Pancreas (tissue), 10 donors: ENCODE measurements at regions of chr3 and their contacts with region 1.

Region 1: DNA sequence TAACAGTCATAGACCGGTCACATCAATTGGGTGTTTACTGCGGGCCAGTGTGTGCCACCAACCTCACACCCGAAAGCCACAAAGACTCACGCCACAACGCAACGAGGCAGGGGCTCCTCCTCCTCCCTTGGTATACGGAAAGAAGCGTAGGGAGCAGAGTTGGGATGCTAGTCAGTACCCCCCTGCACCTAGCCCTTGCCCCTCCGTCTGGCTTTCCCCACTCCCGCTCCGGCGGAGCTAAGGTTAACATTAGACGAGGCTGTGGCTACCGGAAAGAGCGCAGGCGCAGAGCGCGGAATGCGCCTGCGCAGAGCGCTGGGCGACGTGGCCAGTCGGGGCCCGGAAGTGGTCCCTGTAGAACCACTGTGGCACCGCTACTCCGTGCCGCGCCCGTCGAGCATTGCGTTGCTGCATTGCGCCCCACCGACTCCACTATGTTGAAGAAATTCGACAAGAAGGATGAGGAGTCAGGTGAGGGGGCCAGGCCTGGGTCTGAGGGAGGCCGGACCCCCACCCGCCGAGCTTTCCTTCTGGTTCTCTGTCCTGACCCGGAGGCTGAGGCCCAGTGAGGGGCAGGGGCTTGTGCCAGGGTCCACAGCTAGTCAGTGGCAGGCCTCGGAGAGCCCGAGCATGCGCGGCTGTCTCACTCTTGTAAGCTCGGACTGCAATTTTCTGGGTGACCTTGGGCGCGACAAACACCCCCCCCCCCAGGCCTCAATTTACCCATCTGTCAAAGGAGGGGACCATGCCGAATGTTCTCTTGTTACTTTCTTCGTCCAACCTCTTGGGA is at the start of gene COPG1:
- DNase-seq: peak; percentile 75 to 96 (median 90)
- ATAC-seq: peak; percentile 88 to 95 (median 94)
- H3K4me3 ChIP-seq: peak within 1 kb of the TSS; percentile 90 to 100 (median 94)
- H3K27ac ChIP-seq: peak within 1 kb of the TSS; percentile 83 to 92 (median 90)
- H3K4me1 ChIP-seq: peaks cover 0 to 35% (median 7%) of the 10 kb centered on the region in 3 donors
- H3K27me3 ChIP-seq: no peaks in the 10 kb centered on the region
- CTCF ChIP-seq: no peak
- total RNA-seq, gene COPG1: 90.1 to 137 (median 110) TPM

Region 2: DNA sequence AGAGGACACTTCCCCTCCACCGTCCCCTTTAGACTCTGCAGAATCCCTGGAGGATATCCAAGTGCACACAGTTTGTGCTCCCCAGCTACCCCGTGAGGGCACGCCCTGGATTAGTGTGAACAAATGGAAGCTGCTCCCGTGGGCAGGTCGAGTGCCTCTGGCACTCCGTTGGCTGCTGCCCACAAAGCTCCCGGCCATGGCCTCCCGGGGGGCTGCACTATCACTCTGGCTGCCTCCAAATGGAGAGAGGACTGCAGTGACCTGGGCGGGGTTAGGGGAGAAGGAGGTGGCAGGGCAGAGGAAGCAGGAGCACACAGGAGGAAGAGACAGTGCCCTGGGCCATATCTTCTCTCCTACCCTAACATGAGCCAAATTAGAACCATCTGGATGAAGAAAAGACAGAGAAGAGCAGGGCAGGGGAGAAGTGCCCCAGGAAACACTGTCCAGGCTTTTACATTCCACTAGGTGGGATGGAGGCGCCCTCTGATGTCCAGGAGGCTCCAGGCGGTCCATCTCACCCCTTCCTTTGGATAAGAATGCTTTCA is 399.5 kb before region 1 on chr3:
- intact Hi-C with region 1: no loop called
- DNase-seq: no peak
- ATAC-seq: no peak
- H3K4me3 ChIP-seq: no peak overlapping the region
- H3K27ac ChIP-seq: no peak overlapping the region
- H3K4me1 ChIP-seq: peaks cover 0 to 5% (median 0%) of the 10 kb centered on the region in 3 donors
- H3K27me3 ChIP-seq: no peaks in the 10 kb centered on the region
- CTCF ChIP-seq: no peak

Region 3: GRCh38 chr3:128969993-128970739 is 279.3 kb before region 1 on chr3:
- intact Hi-C with region 1: loop called in 2 of 3 experiments (anchors 10 kb)
- DNase-seq: peak in 3 of 6 donors; percentile 37 to 70 (median 41)
- ATAC-seq: peak; percentile 63 to 90 (median 84)
- H3K4me3 ChIP-seq: no peak overlapping the region
- H3K27ac ChIP-seq: no peak overlapping the region
- H3K4me1 ChIP-seq: peaks cover 0 to 3% (median 0%) of the 10 kb centered on the region in 3 donors
- H3K27me3 ChIP-seq: no peaks in the 10 kb centered on the region
- CTCF ChIP-seq: peak; percentile 67 to 84 (median 78)

Region 4: GRCh38 chr3:129176051-129176450 is 73.4 kb before region 1 on chr3:
- intact Hi-C with region 1: loop called in 1 of 3 experiments (anchors 10 kb)
- DNase-seq: no peak
- ATAC-seq: no peak
- H3K4me3 ChIP-seq: peak overlapping the region in 1 of 4 donors; percentile 6
- H3K27ac ChIP-seq: no peak overlapping the region
- H3K4me1 ChIP-seq: peaks cover 41 to 72% (median 64%) of the 10 kb centered on the region in 3 donors
- H3K27me3 ChIP-seq: no peaks in the 10 kb centered on the region
- CTCF ChIP-seq: no peak

Region 5: DNA sequence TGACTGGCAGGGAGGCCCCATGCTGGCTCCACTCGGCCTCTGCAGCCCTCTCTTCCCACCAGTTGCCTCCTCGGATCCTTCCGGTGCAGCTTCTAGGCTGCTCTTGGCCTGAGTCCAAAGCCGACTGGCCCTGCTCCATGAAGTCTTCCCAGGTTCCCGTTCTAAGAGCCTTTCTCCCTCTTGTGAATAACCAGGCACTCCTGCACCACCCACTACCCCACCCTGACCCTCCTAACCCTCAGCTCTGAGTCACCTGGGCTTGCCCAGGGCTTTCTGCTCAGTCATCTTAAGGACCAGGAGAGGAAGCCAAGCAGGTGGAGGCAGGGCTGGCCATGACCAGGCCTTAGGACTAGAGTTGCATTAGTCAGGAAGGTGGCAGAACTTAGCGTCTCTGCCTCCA is 37.7 kb before region 1 on chr3:
- intact Hi-C with region 1: no loop called
- DNase-seq: peak; percentile 47 to 81 (median 74)
- ATAC-seq: peak; percentile 98 to 99 (median 99)
- H3K4me3 ChIP-seq: no peak overlapping the region
- H3K27ac ChIP-seq: peak overlapping the region in 1 of 4 donors; percentile 33
- H3K4me1 ChIP-seq: peaks cover 0 to 6% (median 0%) of the 10 kb centered on the region in 3 donors
- H3K27me3 ChIP-seq: no peaks in the 10 kb centered on the region
- CTCF ChIP-seq: no peak

Region 6: DNA sequence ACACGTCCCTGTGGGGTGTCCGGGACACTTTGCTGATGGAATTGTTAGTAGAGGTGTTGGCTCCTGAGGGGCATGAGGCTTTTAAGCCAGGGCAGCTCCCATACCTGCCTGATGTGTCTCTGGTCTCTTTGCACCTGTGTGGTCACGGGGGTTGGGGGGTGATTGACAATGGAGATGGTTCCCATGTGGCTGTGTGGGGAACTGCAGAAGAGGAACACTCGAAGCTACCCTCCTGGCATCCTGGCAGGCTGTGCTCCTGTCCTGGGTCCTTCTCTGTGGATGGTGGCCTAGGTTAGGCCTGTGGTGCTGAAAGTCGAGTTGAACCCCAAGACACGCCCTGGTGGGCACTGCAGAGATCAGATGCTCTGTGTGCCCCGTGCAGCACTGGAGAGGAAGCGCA is 102.6 kb after region 1 on chr3:
- intact Hi-C with region 1: no loop called
- DNase-seq: no peak
- ATAC-seq: no peak
- H3K4me3 ChIP-seq: no peak overlapping the region
- H3K27ac ChIP-seq: no peak overlapping the region
- H3K4me1 ChIP-seq: no peaks in the 10 kb centered on the region
- H3K27me3 ChIP-seq: no peaks in the 10 kb centered on the region
- CTCF ChIP-seq: peak in 1 of 4 donors; percentile 8

Region 7: GRCh38 chr3:129616713-129617112 is 367.2 kb after region 1 on chr3:
- intact Hi-C with region 1: no loop called
- DNase-seq: peak in 1 of 6 donors; percentile 15
- ATAC-seq: peak in 2 of 4 donors; percentile 50 to 52
- H3K4me3 ChIP-seq: no peak overlapping the region
- H3K27ac ChIP-seq: peak overlapping the region in 2 of 4 donors; percentile 17 to 19
- H3K4me1 ChIP-seq: peaks cover 0 to 7% (median 0%) of the 10 kb centered on the region in 3 donors
- H3K27me3 ChIP-seq: no peaks in the 10 kb centered on the region
- CTCF ChIP-seq: no peak